ENCODE measurements at regions of chr11 and their contacts with region 1.

Region 1: GRCh38 chr11:40202589-40203270 is 1256.7 kb downstream of the LRRC4C start:
- DNase-seq: no peak
- ATAC-seq: no peak
- H3K4me3 Mint-ChIP-seq: no peak overlapping the region
- H3K27ac Mint-ChIP-seq: no peak overlapping the region
- H3K4me1 Mint-ChIP-seq: no peaks in the 10 kb centered on the region
- H3K27me3 Mint-ChIP-seq: no peaks in the 10 kb centered on the region

Region 2: GRCh38 chr11:40104941-40105550 is 97.7 kb before region 1 on chr11:
- CTCF ChIA-PET with region 1: no interaction called
- POLR2A ChIA-PET with region 1: no interaction called
- intact Hi-C with region 1: no loop called
- DNase-seq: no peak
- ATAC-seq: no peak
- H3K4me3 Mint-ChIP-seq: no peak overlapping the region
- H3K27ac Mint-ChIP-seq: no peak overlapping the region
- H3K4me1 Mint-ChIP-seq: no peaks in the 10 kb centered on the region
- H3K27me3 Mint-ChIP-seq: no peaks in the 10 kb centered on the region

Region 3: DNA sequence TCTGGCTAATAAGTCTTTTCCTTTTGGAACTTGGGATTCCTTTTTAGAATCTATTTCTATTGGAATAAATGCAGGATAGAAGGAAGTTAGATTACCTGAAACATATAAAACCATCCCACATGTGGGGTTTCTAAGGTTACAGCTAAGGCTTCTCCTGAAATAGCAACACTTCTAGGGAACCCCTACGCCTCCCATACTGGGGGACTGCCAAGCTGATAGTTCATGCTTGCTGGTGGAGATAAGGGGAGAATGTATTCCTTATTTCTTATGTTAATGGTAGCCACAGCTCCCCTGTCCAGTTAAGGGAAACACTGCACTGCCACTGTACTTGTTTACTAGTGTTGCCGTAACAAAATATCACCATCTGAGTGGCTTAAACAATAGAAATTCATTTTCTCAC is 67.1 kb after region 1 on chr11:
- CTCF ChIA-PET with region 1: no interaction called
- POLR2A ChIA-PET with region 1: no interaction called
- intact Hi-C with region 1: loop called in 1 of 2 experiments (anchors 10 kb)
- DNase-seq: no peak
- ATAC-seq: no peak
- H3K4me3 Mint-ChIP-seq: no peak overlapping the region
- H3K27ac Mint-ChIP-seq: no peak overlapping the region
- H3K4me1 Mint-ChIP-seq: no peaks in the 10 kb centered on the region
- H3K27me3 Mint-ChIP-seq: no peaks in the 10 kb centered on the region

Region 4: GRCh38 chr11:40514124-40514523 is 311.4 kb after region 1 on chr11:
- CTCF ChIA-PET with region 1: no interaction called
- POLR2A ChIA-PET with region 1: no interaction called
- intact Hi-C with region 1: no loop called
- DNase-seq: no peak
- ATAC-seq: no peak
- H3K4me3 Mint-ChIP-seq: no peak overlapping the region
- H3K27ac Mint-ChIP-seq: no peak overlapping the region
- H3K4me1 Mint-ChIP-seq: no peaks in the 10 kb centered on the region
- H3K27me3 Mint-ChIP-seq: no peaks in the 10 kb centered on the region

Region 5: DNA sequence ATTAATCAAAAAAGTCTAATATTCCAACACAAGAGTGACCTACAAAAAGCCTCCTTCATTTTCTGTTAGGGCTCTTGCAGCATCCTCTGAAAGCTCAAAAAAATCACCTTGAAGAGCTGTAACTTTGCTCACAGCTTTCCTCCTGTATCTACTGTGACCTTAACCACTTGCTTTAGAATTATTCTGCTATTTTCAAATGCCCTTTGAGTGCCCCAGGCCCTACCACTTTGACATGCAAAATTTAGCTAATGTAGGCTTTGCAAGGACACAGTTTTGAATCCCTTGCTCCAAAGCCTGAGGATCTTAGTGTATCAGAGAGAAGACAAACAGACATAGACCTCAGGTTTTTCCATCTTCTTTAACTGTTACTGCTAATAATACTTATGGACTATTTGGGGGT is 1003.7 kb after region 1 on chr11:
- CTCF ChIA-PET with region 1: no interaction called
- POLR2A ChIA-PET with region 1: no interaction called
- intact Hi-C with region 1: no loop called
- DNase-seq: no peak
- ATAC-seq: no peak
- H3K4me3 Mint-ChIP-seq: no peak overlapping the region
- H3K27ac Mint-ChIP-seq: no peak overlapping the region
- H3K4me1 Mint-ChIP-seq: no peaks in the 10 kb centered on the region
- H3K27me3 Mint-ChIP-seq: no peaks in the 10 kb centered on the region